ENCODE measurements at regions of chr6 and their contacts with region 1.

Region 1: DNA sequence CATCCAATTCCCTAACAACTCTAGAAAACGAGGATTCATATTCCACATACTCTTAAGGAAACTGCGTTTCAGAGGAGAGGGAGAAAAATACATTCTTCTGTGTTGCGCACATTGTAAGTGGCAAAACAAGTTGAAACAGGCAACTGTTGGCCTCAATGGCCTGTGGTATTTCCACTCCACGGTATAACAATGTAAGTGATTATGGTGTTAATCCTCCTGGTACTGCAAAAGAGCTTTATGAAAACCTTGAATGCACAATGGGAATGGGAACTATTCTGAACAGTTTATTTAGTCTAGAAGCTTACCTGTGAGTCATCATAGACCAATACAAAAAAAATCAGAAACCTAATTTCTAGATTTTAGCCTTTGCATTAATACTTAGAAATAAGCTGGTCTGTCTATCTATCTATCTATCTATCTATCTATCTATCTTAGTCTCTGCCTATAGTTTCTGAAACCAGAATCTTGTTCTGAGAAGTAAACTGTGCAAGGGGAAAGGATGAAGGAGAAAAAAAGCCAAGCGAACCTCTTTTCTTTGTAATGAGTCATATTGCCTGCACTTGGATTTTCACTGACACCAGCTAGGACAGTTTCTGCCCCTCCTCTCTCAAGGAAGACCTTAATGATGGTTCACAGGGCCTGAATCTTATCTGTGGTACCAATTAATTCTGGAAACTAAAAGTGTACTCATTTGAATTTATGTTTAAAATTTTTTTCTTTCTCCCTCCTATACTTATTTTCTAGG is 101.5 kb downstream of the RNF144B start:
- DNase-seq: peak; percentile 93
- H3K4me3 ChIP-seq: peak overlapping the region in 1 of 3 experiments; percentile 21
- H3K27ac ChIP-seq: peak overlapping the region; percentile 91
- H3K4me1 ChIP-seq: peaks cover 23% of the 10 kb centered on the region
- H3K27me3 ChIP-seq: no peaks in the 10 kb centered on the region
- CTCF ChIP-seq: no peak

Region 2: DNA sequence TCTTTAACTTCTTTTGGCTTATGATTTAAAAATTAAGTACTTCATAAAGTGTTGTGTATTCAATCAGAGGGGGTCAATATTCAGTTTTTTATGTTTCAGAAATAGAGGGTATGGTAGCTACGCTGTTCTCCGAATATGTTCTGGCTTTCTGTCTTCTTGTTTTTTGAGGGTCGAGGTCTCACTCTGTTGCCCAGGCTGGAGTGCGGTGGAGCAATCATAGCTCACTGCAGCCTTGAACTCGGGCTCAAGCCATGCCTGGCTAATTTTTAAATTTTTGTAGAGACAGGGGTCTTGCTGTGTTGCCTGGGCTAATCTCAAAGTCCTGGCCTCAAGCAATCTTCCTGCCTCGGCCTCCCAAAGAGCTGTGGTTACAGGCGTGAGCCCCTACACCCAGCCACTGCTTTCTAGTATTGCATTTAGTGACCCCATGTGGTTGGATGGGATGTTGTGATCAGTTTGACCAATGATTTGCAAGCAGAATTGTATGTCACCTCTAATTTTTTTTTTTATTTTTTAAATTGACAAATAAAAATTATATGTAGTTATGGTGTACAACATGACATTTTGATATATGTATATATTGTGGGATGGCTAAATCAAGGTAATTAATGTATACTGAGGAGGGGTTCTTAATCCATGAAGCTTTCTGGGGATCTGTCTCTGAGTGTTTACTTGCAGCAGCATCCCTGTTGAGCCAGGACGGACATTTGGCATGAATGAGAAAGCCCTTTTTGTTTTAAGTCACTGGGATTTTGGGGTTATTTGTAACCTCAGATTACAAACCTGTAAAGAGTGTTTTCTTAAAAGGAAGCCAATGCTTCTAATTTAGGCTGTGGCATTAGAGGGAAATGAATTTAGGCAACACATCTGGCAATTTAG is 185.9 kb before region 1 on chr6:
- CTCF ChIA-PET with region 1: no interaction called
- dilution Hi-C with region 1: loop called (anchors 10 kb)
- in situ Hi-C with region 1: no loop called
- intact Hi-C with region 1: no loop called
- DNase-seq: no peak
- H3K4me3 ChIP-seq: no peak overlapping the region
- H3K27ac ChIP-seq: no peak overlapping the region
- H3K4me1 ChIP-seq: peaks cover 16% of the 10 kb centered on the region
- H3K27me3 ChIP-seq: no peaks in the 10 kb centered on the region
- CTCF ChIP-seq: no peak